Activated CD8-positive, alpha-beta T cell treated with anti-CD3 and anti-CD28 coated beads, Interleukin-2, amount 10 ng/mL, durations not matched to agents 7 days and 5 days (primary cell): ENCODE measurements at regions of chr17 and their contacts with region 1.

Region 1: GRCh38 chr17:29589524-29590410 is at the start of gene GIT1:
- DNase-seq: peak; percentile 87
- ATAC-seq: peak; percentile 74
- H3K4me3 Mint-ChIP-seq: peak within 1 kb of the TSS; percentile 97
- H3K27ac Mint-ChIP-seq: peak within 1 kb of the TSS; percentile 90
- H3K4me1 Mint-ChIP-seq: peaks cover 73% of the 10 kb centered on the region
- H3K27me3 Mint-ChIP-seq: no peaks in the 10 kb centered on the region
- total RNA-seq, gene GIT1: 72.7 to 75.1 TPM

Region 2: DNA sequence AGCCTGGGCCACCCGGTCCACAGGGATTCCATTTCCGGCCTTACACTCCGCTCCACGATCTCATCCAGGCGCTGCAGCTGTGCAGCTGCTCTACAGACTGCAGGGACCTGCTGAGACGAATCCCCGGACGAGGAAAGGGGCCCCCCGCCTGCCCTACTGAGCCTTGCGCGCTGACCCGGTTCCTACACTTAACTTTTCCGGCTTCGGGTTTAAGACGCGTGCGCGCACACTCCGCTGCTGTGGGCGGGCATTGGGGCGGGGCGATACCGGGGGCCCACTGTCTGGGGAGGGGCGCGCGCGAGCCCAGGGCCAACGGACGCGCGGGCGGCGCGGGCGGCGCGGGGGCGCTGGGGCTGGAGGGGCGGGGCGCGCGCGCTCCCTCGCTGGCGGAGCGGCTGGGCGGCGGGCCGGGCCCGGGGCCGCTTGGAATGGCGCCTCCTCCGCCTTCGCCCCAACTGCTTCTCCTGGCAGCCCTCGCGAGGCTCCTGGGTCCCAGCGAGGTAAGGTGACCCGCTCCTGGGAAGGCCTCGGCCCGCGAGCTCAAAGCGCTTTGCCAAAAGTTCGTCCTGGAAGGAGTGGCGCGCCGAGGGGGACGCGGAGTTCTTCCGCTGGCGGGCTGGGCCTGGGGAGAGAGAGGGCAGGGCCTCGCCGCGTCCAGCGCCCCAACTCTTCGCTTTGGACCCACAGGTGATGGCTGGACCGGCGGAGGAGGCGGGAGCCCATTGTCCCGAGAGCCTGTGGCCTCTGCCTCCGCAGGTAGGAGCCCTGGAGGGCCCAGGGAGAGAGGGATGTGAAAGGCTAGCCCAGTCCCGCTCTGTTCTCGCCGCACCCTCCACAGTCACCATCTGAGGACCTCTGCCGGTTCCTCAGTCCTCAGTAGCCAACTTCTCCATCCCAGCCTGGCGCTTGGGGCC is 21.2 kb before region 1 on chr17 and contains the start of gene TP53I13:
- CTCF ChIA-PET with region 1: interaction called, 45 read pairs
- POLR2A ChIA-PET with region 1: interaction called, 4 read pairs
- DNase-seq: peak; percentile 92
- ATAC-seq: peak; percentile 63
- H3K4me3 Mint-ChIP-seq: peak within 1 kb of the TSS; percentile 94
- H3K27ac Mint-ChIP-seq: peak within 1 kb of the TSS; percentile 98
- H3K4me1 Mint-ChIP-seq: peaks cover 35% of the 10 kb centered on the region
- H3K27me3 Mint-ChIP-seq: no peaks in the 10 kb centered on the region
- total RNA-seq, gene TP53I13: 96.7 to 97.9 TPM